ENCODE measurements at regions of chr9 and their contacts with region 1.

Region 1: DNA sequence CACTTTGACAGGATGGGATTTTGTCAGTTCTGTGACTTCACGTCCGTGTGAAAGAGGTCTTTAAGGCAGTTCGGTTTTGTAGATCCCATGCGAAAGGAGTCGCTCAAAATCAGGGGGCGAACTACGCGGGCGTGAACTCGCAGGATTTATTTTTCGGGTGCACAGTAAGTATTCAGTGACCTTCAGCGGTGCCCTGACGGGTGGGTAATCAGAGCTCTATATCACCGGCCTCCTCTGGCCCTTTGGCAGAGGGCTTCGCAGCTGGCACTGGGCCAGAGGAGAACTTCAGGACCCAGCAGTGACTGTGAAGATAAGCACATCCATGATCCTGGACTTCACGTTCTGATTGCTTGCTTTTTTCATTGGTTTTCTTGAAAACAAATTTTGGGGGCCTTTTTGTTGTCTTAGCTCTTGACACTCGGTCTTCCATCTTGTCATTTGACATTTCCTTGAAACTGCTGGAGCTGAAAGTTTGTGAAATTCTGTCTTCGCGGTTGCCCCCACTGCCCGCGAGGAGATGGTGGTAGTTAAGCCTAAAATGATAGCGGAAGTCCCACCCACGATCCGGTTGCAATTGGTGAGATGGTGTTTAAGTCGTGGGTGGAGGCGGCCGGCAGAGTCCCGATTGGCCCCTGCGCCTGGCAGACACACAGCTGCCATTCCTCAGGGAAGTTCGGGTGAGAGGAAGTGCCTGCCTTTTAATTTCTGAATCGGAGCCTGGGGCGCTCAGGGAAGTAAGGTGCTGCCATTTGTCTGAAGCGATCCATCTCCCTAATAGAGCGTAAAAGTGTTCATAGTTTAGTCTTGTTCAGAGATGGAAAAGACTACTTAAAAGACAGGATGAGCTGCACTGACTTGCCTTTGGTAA is at the start of gene FAM120AOS:
- DNase-seq: peak; percentile 92
- ATAC-seq: peak; percentile 72
- H3K4me3 ChIP-seq: peak within 1 kb of the TSS; percentile 73 to 96 (median 84)
- H3K4me3 Mint-ChIP-seq: peak within 1 kb of the TSS; percentile 93
- H3K27ac ChIP-seq: peak within 1 kb of the TSS; percentile 65 to 79
- H3K27ac Mint-ChIP-seq: peak within 1 kb of the TSS; percentile 93
- H3K4me1 ChIP-seq: peaks cover 20 to 29% of the 10 kb centered on the region in 2 donors
- H3K4me1 Mint-ChIP-seq: peaks cover 44% of the 10 kb centered on the region
- H3K27me3 ChIP-seq: no peaks in the 10 kb centered on the region
- H3K27me3 Mint-ChIP-seq: no peaks in the 10 kb centered on the region
- CTCF ChIP-seq: no peak
- total RNA-seq, gene FAM120AOS: 47.8 and 51.2 TPM in 2 replicates

Region 2: DNA sequence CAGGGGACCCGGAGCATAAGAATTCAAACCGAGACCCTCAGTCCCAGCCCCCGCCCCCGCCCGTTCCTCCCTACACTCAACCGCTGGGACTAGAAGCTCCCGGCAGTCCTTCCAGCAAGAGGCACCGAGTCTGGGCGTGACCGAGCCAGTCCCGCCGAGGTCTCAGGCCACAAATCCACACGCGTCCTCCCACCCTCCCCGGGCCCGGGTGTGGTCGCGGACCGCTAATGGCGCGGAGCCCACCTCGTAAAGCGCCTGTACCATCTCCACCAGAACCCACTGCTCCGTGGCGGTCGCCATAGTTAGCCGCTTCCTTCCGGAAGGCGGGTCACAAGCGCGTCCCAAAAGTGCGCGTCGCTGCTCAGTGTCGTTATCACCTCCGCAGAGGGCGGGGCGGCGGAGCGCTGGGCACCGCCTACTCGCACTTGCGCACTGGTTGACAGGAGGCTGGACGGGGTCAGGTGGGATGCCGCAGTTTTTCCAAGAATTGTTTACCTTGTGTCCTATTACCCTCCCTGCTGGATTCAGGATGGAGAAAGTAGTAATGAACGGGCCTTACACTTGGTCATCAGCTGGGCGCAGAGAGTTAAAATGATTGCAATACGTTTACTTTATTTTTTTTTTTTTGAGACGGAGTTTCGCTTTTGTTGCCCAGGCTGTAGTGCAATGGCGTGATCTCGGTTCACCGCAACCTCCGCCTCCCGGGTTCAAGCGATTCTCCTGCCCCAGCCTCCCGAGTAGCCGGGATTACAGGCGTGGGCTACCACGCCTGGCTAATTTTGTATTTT is 1338.0 kb before region 1 on chr9 and contains the start of gene SPTLC1:
- CTCF ChIA-PET with region 1: no interaction called
- POLR2A ChIA-PET with region 1: no interaction called
- intact Hi-C with region 1: loop called (anchors 5 kb)
- DNase-seq: peak; percentile 97
- ATAC-seq: peak; percentile 98
- H3K4me3 ChIP-seq: peak within 1 kb of the TSS; percentile 63 to 91 (median 83)
- H3K4me3 Mint-ChIP-seq: peak within 1 kb of the TSS; percentile 99
- H3K27ac ChIP-seq: peak within 1 kb of the TSS; percentile 81 to 96
- H3K27ac Mint-ChIP-seq: peak within 1 kb of the TSS; percentile 99
- H3K4me1 ChIP-seq: peaks cover 15 to 16% of the 10 kb centered on the region in 2 donors
- H3K4me1 Mint-ChIP-seq: peaks cover 29% of the 10 kb centered on the region
- H3K27me3 ChIP-seq: no peaks in the 10 kb centered on the region
- H3K27me3 Mint-ChIP-seq: no peaks in the 10 kb centered on the region
- CTCF ChIP-seq: no peak
- total RNA-seq, gene SPTLC1: 53.5 and 57.3 TPM in 2 replicates

Region 3: DNA sequence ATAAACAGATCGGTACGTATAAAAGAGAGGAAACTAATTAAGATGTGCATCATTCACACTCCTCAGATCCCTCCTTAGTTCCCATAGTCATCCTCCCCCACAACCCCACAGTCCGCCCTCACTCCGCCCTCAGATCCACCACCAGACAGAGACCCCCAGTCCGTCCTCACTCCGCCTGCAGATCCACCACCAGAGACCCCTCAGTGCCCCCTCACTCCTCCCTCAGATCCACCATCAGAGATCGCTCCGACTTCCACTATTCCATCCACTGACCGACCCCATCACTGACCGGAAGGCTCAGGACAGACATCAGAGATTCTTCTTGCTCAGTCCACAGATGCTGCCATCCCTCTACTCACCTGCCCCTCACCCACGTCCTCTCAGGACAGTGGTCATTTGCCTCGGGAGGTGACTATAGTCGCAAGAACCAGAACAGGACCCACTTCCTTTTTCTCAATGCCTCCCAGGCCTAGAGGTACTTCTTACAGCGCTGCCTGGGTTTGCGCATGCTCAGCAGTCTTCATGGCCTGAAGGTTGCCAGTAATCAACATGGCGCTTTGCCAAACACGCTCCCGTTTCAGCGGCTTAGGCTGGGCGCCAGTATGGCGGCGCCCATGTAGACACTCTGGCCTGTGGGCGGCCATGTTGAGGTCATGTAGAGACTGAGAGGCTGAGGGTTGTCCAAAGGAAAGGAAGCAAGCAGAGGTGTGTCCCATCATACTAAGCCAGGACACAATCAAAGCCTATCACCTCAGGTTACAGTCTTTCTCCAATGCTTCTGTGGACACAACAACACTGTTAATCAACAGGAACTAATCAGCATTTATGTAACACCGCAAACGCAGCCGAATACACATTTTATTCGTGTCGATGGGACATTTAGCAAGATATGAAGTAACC is 575.5 kb before region 1 on chr9 and contains the start of gene ZNF484:
- CTCF ChIA-PET with region 1: no interaction called
- POLR2A ChIA-PET with region 1: no interaction called
- intact Hi-C with region 1: loop called (anchors 2 kb)
- DNase-seq: peak; percentile 99
- ATAC-seq: peak; percentile 96
- H3K4me3 ChIP-seq: peak within 1 kb of the TSS; percentile 68 to 94 (median 78)
- H3K4me3 Mint-ChIP-seq: peak within 1 kb of the TSS; percentile 100
- H3K27ac ChIP-seq: peak within 1 kb of the TSS; percentile 85 to 93
- H3K27ac Mint-ChIP-seq: peak within 1 kb of the TSS; percentile 99
- H3K4me1 ChIP-seq: peaks cover 3 to 9% of the 10 kb centered on the region in 2 donors
- H3K4me1 Mint-ChIP-seq: peaks cover 31% of the 10 kb centered on the region
- H3K27me3 ChIP-seq: no peaks in the 10 kb centered on the region
- H3K27me3 Mint-ChIP-seq: no peaks in the 10 kb centered on the region
- CTCF ChIP-seq: no peak
- total RNA-seq, gene ZNF484: 22.7 and 22.9 TPM in 2 replicates

Region 4: GRCh38 chr9:93431583-93431991 is 21.7 kb before region 1 on chr9:
- CTCF ChIA-PET with region 1: no interaction called
- POLR2A ChIA-PET with region 1: no interaction called
- intact Hi-C with region 1: no loop called
- DNase-seq: no peak
- ATAC-seq: no peak
- H3K4me3 ChIP-seq: no peak overlapping the region
- H3K4me3 Mint-ChIP-seq: no peak overlapping the region
- H3K27ac ChIP-seq: no peak overlapping the region
- H3K27ac Mint-ChIP-seq: no peak overlapping the region
- H3K4me1 ChIP-seq: no peaks in the 10 kb centered on the region
- H3K4me1 Mint-ChIP-seq: no peaks in the 10 kb centered on the region
- H3K27me3 ChIP-seq: peaks cover 0 to 5% (median 3%) of the 10 kb centered on the region in 4 experiments
- H3K27me3 Mint-ChIP-seq: peaks cover 20% of the 10 kb centered on the region
- CTCF ChIP-seq: no peak

Region 5: DNA sequence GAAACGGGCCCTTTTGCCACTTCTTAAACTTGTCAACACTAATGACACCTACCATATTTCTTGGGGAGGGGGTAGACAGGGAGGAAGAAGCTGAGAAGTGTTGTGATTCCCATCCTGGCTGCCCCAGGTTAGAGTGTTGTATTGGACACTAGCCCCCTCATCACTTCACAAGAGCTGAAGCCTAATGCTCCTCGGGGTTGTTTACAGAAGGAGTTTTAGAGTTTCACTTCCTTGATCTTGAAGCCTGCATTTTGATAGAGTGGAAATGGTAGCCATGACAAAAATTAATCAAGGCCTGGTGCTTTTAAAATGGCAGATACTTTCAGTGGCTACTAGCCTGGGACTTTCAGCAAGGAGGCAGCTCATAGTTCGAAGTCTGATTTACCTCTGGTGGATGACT is 11.1 kb after region 1 on chr9:
- CTCF ChIA-PET with region 1: interaction called, 14 read pairs
- POLR2A ChIA-PET with region 1: interaction called, 24 read pairs
- intact Hi-C with region 1: loop called (anchors 1 kb)
- DNase-seq: peak; percentile 77
- ATAC-seq: peak; percentile 88
- H3K4me3 ChIP-seq: peak overlapping the region in 2 of 5 experiments; percentile 5 to 37
- H3K4me3 Mint-ChIP-seq: peak overlapping the region; percentile 70
- H3K27ac ChIP-seq: peak overlapping the region; percentile 67 to 85
- H3K27ac Mint-ChIP-seq: peak overlapping the region; percentile 91
- H3K4me1 ChIP-seq: peaks cover 61 to 63% of the 10 kb centered on the region in 2 donors
- H3K4me1 Mint-ChIP-seq: peaks cover 82% of the 10 kb centered on the region
- H3K27me3 ChIP-seq: no peaks in the 10 kb centered on the region
- H3K27me3 Mint-ChIP-seq: no peaks in the 10 kb centered on the region
- CTCF ChIP-seq: no peak

Region 6: GRCh38 chr9:93505541-93506132 is 52.4 kb after region 1 on chr9:
- CTCF ChIA-PET with region 1: no interaction called
- POLR2A ChIA-PET with region 1: interaction called, 3 read pairs
- intact Hi-C with region 1: loop called (anchors 1 kb)
- DNase-seq: peak; percentile 13
- ATAC-seq: no peak
- H3K4me3 ChIP-seq: peak overlapping the region in 1 of 5 experiments; percentile 27
- H3K4me3 Mint-ChIP-seq: peak overlapping the region; percentile 51
- H3K27ac ChIP-seq: peak overlapping the region in 1 of 2 donors; percentile 53
- H3K27ac Mint-ChIP-seq: peak overlapping the region; percentile 83
- H3K4me1 ChIP-seq: peaks cover 34 to 39% of the 10 kb centered on the region in 2 donors
- H3K4me1 Mint-ChIP-seq: peaks cover 64% of the 10 kb centered on the region
- H3K27me3 ChIP-seq: no peaks in the 10 kb centered on the region
- H3K27me3 Mint-ChIP-seq: no peaks in the 10 kb centered on the region
- CTCF ChIP-seq: no peak

Region 7: DNA sequence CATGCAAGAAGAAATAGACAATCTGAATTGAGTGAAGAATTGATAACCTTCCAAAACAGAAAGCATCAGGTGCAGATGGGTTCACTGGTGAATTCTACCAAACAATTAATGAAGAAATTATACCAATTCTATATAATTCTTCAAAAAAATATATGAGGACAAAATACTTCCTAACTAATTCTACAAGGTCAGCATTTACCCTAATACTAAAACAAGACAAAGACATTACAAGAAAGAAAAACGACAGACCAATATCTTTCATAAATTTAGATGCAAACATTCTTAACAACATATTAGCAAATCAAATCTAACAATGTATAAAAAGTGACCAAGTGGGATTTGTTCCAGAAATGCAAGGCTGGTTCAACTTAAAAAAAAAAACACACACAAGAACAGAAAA is 318.0 kb after region 1 on chr9:
- CTCF ChIA-PET with region 1: no interaction called
- POLR2A ChIA-PET with region 1: no interaction called
- intact Hi-C with region 1: no loop called
- DNase-seq: no peak
- ATAC-seq: no peak
- H3K4me3 ChIP-seq: no peak overlapping the region
- H3K4me3 Mint-ChIP-seq: no peak overlapping the region
- H3K27ac ChIP-seq: no peak overlapping the region
- H3K27ac Mint-ChIP-seq: no peak overlapping the region
- H3K4me1 ChIP-seq: no peaks in the 10 kb centered on the region
- H3K4me1 Mint-ChIP-seq: no peaks in the 10 kb centered on the region
- H3K27me3 ChIP-seq: peaks cover 0 to 6% (median 0%) of the 10 kb centered on the region in 4 experiments
- H3K27me3 Mint-ChIP-seq: peaks cover 9% of the 10 kb centered on the region
- CTCF ChIP-seq: no peak

Region 8: GRCh38 chr9:94030318-94031179 is 577.3 kb after region 1 on chr9:
- CTCF ChIA-PET with region 1: no interaction called
- POLR2A ChIA-PET with region 1: no interaction called
- intact Hi-C with region 1: loop called (anchors 5 kb)
- DNase-seq: peak; percentile 85
- ATAC-seq: peak; percentile 99
- H3K4me3 ChIP-seq: peak overlapping the region; percentile 58 to 90 (median 77)
- H3K4me3 Mint-ChIP-seq: peak overlapping the region; percentile 100
- H3K27ac ChIP-seq: peak overlapping the region; percentile 36 to 79
- H3K27ac Mint-ChIP-seq: peak overlapping the region; percentile 97
- H3K4me1 ChIP-seq: peaks cover 12 to 13% of the 10 kb centered on the region in 2 donors
- H3K4me1 Mint-ChIP-seq: peaks cover 15% of the 10 kb centered on the region
- H3K27me3 ChIP-seq: peaks cover 0 to 6% (median 0%) of the 10 kb centered on the region in 4 experiments
- H3K27me3 Mint-ChIP-seq: peaks cover 5% of the 10 kb centered on the region
- CTCF ChIP-seq: no peak

Region 9: GRCh38 chr9:94166237-94166963 is 713.1 kb after region 1 on chr9:
- CTCF ChIA-PET with region 1: no interaction called
- POLR2A ChIA-PET with region 1: no interaction called
- intact Hi-C with region 1: loop called (anchors 2 kb)
- DNase-seq: peak; percentile 96
- ATAC-seq: peak; percentile 56
- H3K4me3 ChIP-seq: peak overlapping the region in 4 of 5 experiments; percentile 75 to 86 (median 80)
- H3K4me3 Mint-ChIP-seq: peak overlapping the region; percentile 92
- H3K27ac ChIP-seq: peak overlapping the region; percentile 86 to 99
- H3K27ac Mint-ChIP-seq: peak overlapping the region; percentile 95
- H3K4me1 ChIP-seq: peaks cover 36 to 46% of the 10 kb centered on the region in 2 donors
- H3K4me1 Mint-ChIP-seq: peaks cover 49% of the 10 kb centered on the region
- H3K27me3 ChIP-seq: no peaks in the 10 kb centered on the region
- H3K27me3 Mint-ChIP-seq: no peaks in the 10 kb centered on the region
- CTCF ChIP-seq: no peak